Endothelial cell of umbilical vein (primary cell): ENCODE measurements at regions of chr2 and their contacts with region 1.

Region 1: DNA sequence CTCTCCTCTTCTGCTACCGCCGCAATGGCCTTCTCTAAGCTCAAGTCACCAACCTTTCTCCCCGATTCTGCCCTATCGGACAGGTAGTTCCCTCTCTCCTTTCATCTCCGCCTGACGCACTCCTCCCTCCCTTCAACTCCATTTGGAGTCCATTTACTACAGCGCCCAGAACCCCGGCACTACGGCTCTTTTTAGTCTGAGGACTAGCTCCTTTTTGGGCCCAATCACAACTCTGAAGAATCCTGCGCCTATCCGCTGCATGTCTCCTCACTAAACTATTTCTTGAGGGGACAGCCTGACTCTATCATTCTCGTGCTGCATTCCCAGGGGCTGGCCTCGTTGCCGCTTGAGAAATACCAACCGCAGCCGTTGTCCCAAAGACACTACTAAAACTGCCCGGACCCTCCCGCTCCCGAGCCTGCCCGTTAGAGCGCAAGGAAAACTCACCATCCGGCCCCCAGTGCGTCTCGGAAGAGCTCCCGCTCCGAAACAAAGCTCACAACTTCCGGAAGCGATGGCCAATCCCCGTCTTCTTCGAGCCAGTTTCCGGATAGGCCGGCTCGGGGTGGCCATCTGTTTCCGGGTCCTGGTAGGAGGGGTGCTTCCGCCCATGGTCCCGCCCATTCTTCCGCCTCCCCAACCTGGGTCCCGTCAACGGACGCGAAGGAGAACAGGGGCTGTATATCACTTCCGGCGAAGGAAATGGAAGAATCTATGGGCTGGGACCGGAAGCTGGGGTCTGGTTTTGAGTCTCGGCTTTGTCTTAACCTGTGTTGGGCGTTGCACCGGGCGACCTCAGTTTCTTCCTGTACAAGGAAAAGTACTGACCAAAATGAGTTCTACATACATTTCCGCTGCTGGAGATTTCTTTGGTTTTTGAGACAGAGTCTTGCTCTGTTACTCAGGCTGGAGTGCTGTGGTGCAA is at the start of gene TPRKB:
- DNase-seq: peak; percentile 95
- H3K4me3 ChIP-seq: peak within 1 kb of the TSS; percentile 75 to 98 (median 82)
- H3K27ac ChIP-seq: peak within 1 kb of the TSS; percentile 88
- H3K4me1 ChIP-seq: peaks cover 16% of the 10 kb centered on the region
- H3K27me3 ChIP-seq: no peaks in the 10 kb centered on the region
- CTCF ChIP-seq: no peak
- POLR2A ChIP-seq: peak; percentile 63
- total RNA-seq, gene TPRKB: 33.4 and 36.1 TPM in 2 replicates

Region 2: DNA sequence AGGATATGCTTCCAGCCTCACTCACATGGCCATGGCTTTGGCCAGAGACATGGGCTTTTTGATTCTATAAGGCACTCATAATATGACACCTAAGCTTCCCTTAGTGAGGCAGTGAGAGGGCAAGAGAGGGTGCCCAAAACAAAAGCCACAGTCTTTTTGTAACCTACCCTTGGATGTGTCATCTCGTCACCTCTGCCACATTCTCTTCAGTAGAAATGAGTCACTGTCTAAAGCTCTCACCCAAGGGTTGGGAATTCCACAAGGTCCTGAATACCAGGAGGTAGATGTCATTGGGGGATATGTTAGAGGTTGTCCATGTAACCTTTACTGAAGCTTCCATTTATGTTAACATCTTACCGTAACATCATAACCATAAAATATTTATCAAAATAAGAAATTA is 243.1 kb before region 1 on chr2:
- CTCF ChIA-PET with region 1: no interaction called
- POLR2A ChIA-PET with region 1: no interaction called
- dilution Hi-C with region 1: no loop called
- intact Hi-C with region 1: no loop called
- DNase-seq: no peak
- H3K4me3 ChIP-seq: no peak overlapping the region
- H3K27ac ChIP-seq: no peak overlapping the region
- H3K4me1 ChIP-seq: no peaks in the 10 kb centered on the region
- H3K27me3 ChIP-seq: no peaks in the 10 kb centered on the region
- CTCF ChIP-seq: no peak
- POLR2A ChIP-seq: no peak

Region 3: GRCh38 chr2:73516033-73516432 is 221.1 kb before region 1 on chr2:
- CTCF ChIA-PET with region 1: no interaction called
- POLR2A ChIA-PET with region 1: no interaction called
- dilution Hi-C with region 1: no loop called
- intact Hi-C with region 1: no loop called
- DNase-seq: no peak
- H3K4me3 ChIP-seq: no peak overlapping the region
- H3K27ac ChIP-seq: no peak overlapping the region
- H3K4me1 ChIP-seq: no peaks in the 10 kb centered on the region
- H3K27me3 ChIP-seq: no peaks in the 10 kb centered on the region
- CTCF ChIP-seq: no peak
- POLR2A ChIP-seq: no peak

Region 4: DNA sequence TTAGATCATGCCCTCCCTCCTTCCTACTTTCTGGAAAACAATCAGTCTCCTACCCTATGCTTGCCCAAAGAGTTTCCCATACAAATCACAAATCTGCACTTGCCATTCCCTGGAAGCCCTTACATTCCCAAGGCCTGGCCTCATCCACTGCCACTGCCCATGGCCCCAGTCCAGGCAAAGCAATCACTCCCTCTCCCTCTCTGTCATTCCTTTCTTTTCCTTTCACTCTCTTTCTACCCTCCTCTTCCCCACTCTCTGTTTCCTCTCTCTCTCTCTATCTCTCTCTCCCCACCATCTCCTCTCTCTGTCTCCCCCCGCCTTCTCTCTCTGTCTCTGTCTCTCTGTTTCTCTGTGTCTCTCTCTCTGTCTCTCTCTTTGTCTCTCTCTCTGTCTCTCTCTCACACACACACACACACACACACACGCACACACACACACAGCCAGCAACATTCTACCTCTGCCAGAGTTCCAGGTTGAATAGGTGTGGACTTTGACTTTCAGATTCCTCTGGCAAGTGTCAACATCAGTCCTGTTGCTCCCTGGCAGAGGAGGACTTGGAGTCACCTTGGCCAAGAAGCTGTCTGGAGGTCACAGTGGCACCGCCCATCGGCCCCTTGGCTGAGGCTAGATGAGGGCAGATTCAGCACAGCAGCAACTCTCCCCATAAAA is 51.2 kb before region 1 on chr2:
- CTCF ChIA-PET with region 1: interaction called, 5 read pairs
- POLR2A ChIA-PET with region 1: no interaction called
- dilution Hi-C with region 1: no loop called
- intact Hi-C with region 1: loop called (anchors 5 kb)
- DNase-seq: no peak
- H3K4me3 ChIP-seq: no peak overlapping the region
- H3K27ac ChIP-seq: no peak overlapping the region
- H3K4me1 ChIP-seq: no peaks in the 10 kb centered on the region
- H3K27me3 ChIP-seq: peaks cover 9 to 14% of the 10 kb centered on the region in 2 experiments
- CTCF ChIP-seq: no peak
- POLR2A ChIP-seq: no peak

Region 5: DNA sequence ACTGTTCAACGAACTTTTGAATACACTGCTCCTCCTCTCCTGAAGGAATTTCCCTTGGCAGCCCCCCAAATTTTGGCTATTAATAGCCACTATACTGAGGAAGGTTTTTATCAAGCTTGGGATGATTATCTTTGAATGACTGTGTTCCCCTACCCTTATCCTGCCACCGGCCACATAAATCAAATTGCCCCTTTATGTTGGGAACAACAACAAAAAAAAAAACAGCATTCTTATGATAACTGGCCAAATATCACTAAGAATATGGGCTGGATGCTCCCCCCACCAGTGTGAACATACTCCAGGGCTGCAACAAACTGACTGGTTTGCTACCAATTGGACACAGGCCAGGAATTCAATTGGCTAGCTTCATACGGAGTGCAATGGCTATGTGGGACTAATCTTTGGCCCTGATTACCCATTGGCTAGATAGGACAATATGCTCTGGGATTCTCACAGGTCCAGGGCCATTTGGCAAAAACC is 22.2 kb after region 1 on chr2:
- CTCF ChIA-PET with region 1: interaction called, 4 read pairs
- POLR2A ChIA-PET with region 1: interaction called, 3 read pairs
- dilution Hi-C with region 1: no loop called
- intact Hi-C with region 1: loop called (anchors 1 kb)
- DNase-seq: peak; percentile 95
- H3K4me3 ChIP-seq: no peak overlapping the region
- H3K27ac ChIP-seq: peak overlapping the region; percentile 5
- H3K4me1 ChIP-seq: peaks cover 17% of the 10 kb centered on the region
- H3K27me3 ChIP-seq: no peaks in the 10 kb centered on the region
- CTCF ChIP-seq: no peak
- POLR2A ChIP-seq: no peak

Region 6: DNA sequence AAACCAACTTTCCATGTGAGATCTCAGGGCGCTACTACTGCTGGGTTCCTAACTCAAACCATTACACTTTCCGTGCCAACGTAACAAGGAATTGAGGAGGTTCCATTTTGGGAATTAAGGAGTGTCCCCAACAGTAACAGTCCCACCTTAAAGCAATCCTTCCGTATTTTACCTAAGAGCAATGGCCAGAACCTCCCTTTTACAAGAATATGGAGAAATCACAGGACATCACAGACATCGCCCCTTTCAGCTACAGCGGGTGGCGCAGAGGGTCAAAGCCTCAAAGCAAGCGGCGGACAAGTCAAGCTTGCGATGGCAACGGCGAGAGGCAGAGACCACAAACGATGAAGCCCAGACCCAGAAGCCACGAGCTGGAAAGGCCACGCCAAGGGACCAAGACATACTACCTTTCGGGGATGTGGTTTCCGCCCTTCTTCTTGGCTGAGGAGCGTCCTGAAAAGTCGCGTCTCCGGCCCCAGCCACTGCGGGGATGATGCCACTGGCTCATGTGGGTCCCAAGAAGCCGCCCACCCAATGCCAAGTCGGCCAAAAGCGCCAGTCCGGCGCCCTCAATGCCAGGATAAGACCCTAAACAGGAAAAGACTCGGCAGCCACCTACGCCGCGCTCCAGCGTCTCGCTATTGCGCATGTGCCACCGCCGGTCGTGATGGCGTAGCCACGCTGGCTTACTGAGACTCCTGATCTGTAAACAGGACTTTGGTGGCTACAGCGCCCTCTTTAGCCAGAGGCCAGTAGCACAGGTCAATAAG is 42.5 kb after region 1 on chr2 and contains the start of gene DUSP11:
- CTCF ChIA-PET with region 1: interaction called, 8 read pairs
- POLR2A ChIA-PET with region 1: no interaction called
- dilution Hi-C with region 1: no loop called
- intact Hi-C with region 1: loop called (anchors 1 kb)
- DNase-seq: peak; percentile 97
- H3K4me3 ChIP-seq: peak within 1 kb of the TSS; percentile 66 to 92 (median 68)
- H3K27ac ChIP-seq: peak within 1 kb of the TSS; percentile 36
- H3K4me1 ChIP-seq: peaks cover 9% of the 10 kb centered on the region
- H3K27me3 ChIP-seq: no peaks in the 10 kb centered on the region
- CTCF ChIP-seq: peak; percentile 92 to 95
- POLR2A ChIP-seq: peak; percentile 92
- total RNA-seq, gene DUSP11: 25.3 and 27.0 TPM in 2 replicates

Region 7: GRCh38 chr2:73926493-73927338 is 189.6 kb after region 1 on chr2 and contains the start of gene DGUOK:
- CTCF ChIA-PET with region 1: no interaction called
- POLR2A ChIA-PET with region 1: no interaction called
- dilution Hi-C with region 1: no loop called
- intact Hi-C with region 1: loop called (anchors 1 kb)
- DNase-seq: peak; percentile 98
- H3K4me3 ChIP-seq: peak within 1 kb of the TSS; percentile 48 to 95 (median 91)
- H3K27ac ChIP-seq: peak within 1 kb of the TSS; percentile 98
- H3K4me1 ChIP-seq: peaks cover 13% of the 10 kb centered on the region
- H3K27me3 ChIP-seq: peaks cover 8 to 9% of the 10 kb centered on the region in 2 experiments
- CTCF ChIP-seq: no peak
- POLR2A ChIP-seq: peak; percentile 84
- total RNA-seq, gene DGUOK: 51.8 and 58.8 TPM in 2 replicates